T-cell (primary cell): ENCODE measurements at regions of chr2 and their contacts with region 1.

Region 1: GRCh38 chr2:237474931-237475703 is 11.9 kb upstream of the MLPH start:
- DNase-seq: peak; percentile 27 to 82 (median 64)
- ATAC-seq: peak; percentile 83 to 89 (median 86)
- H3K4me3 ChIP-seq: peak overlapping the region; percentile 52 to 76
- H3K4me3 Mint-ChIP-seq: peak overlapping the region; percentile 81 to 89 (median 84)
- H3K27ac ChIP-seq: peak overlapping the region; percentile 42
- H3K27ac Mint-ChIP-seq: peak overlapping the region; percentile 76 to 82
- H3K4me1 ChIP-seq: peaks cover 3 to 26% of the 10 kb centered on the region in 2 experiments
- H3K4me1 Mint-ChIP-seq: peaks cover 11 to 15% (median 12%) of the 10 kb centered on the region in 3 donors
- H3K27me3 ChIP-seq: peaks cover 0 to 12% of the 10 kb centered on the region in 2 experiments
- H3K27me3 Mint-ChIP-seq: peaks cover 16 to 19% of the 10 kb centered on the region in 2 donors

Region 2: GRCh38 chr2:237421542-237422116 is 53.5 kb before region 1 on chr2:
- CTCF ChIA-PET with region 1: interaction called, 64 to 70 read pairs
- POLR2A ChIA-PET with region 1: interaction called in 1 of 2 experiments, 3 read pairs
- DNase-seq: peak; percentile 25 to 89 (median 72)
- ATAC-seq: peak; percentile 89 to 95 (median 91)
- H3K4me3 ChIP-seq: peak overlapping the region in 1 of 2 donors; percentile 29
- H3K4me3 Mint-ChIP-seq: peak overlapping the region; percentile 37 to 75 (median 53)
- H3K27ac ChIP-seq: no peak overlapping the region
- H3K27ac Mint-ChIP-seq: peak overlapping the region; percentile 50 to 59
- H3K4me1 ChIP-seq: peaks cover 3 to 16% of the 10 kb centered on the region in 2 experiments
- H3K4me1 Mint-ChIP-seq: peaks cover 27 to 48% (median 28%) of the 10 kb centered on the region in 3 donors
- H3K27me3 ChIP-seq: peaks cover 0 to 5% of the 10 kb centered on the region in 2 experiments
- H3K27me3 Mint-ChIP-seq: no peaks in the 10 kb centered on the region

Region 3: GRCh38 chr2:237427769-237428506 is 47.2 kb before region 1 on chr2:
- CTCF ChIA-PET with region 1: interaction called, 11 to 64 read pairs
- POLR2A ChIA-PET with region 1: no interaction called
- DNase-seq: peak in 8 of 35 experiments; percentile 13 to 57 (median 37)
- ATAC-seq: peak; percentile 54 to 67 (median 61)
- H3K4me3 ChIP-seq: no peak overlapping the region
- H3K4me3 Mint-ChIP-seq: peak overlapping the region in 2 of 3 donors; percentile 34 to 69
- H3K27ac ChIP-seq: peak overlapping the region; percentile 8
- H3K27ac Mint-ChIP-seq: peak overlapping the region; percentile 80 to 89
- H3K4me1 ChIP-seq: peaks cover 44 to 49% of the 10 kb centered on the region in 2 experiments
- H3K4me1 Mint-ChIP-seq: peaks cover 75 to 88% (median 79%) of the 10 kb centered on the region in 3 donors
- H3K27me3 ChIP-seq: no peaks in the 10 kb centered on the region
- H3K27me3 Mint-ChIP-seq: no peaks in the 10 kb centered on the region

Region 4: GRCh38 chr2:237434866-237435311 is 40.2 kb before region 1 on chr2:
- CTCF ChIA-PET with region 1: interaction called in 1 of 2 experiments, 10 read pairs
- POLR2A ChIA-PET with region 1: interaction called in 1 of 2 experiments, 8 read pairs
- DNase-seq: peak; percentile 42 to 79 (median 67)
- ATAC-seq: peak; percentile 63 to 76 (median 76)
- H3K4me3 ChIP-seq: peak overlapping the region in 1 of 2 donors; percentile 3
- H3K4me3 Mint-ChIP-seq: peak overlapping the region; percentile 71 to 84 (median 74)
- H3K27ac ChIP-seq: peak overlapping the region; percentile 75
- H3K27ac Mint-ChIP-seq: peak overlapping the region; percentile 99
- H3K4me1 ChIP-seq: peaks cover 60 to 77% of the 10 kb centered on the region in 2 experiments
- H3K4me1 Mint-ChIP-seq: peaks cover 83 to 90% (median 85%) of the 10 kb centered on the region in 3 donors
- H3K27me3 ChIP-seq: no peaks in the 10 kb centered on the region
- H3K27me3 Mint-ChIP-seq: no peaks in the 10 kb centered on the region

Region 5: DNA sequence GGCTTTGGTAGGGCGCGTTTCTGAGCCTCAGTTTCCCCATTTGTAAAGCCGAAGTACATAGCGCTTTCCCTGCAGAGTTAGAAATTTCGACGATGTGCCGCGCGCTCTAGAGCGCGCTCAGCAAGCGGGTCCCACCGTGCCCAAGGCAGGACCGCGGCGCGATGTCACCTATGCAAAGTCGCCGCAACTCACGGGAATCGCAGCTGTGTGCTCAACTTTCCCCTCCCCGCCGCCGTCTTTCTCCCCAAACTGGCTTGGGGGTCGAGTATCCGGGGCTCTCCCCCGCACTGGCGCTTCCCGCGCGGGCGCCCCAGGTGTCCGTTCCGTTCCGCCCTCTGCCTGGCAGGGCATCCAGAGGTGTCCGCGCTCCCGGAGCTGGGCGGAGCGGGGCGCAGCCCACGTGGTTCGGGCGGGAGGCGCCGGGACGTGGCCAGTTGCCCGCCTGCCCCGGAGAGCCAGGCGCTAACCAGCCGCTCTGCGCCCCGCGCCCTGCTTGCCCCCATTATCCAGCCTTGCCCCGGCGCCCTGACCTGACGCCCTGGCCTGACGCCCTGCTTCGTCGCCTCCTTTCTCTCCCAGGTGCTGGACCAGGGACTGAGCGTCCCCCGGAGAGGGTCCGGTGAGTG is 11.8 kb after region 1 on chr2 and contains the start of gene MLPH:
- CTCF ChIA-PET with region 1: no interaction called
- POLR2A ChIA-PET with region 1: no interaction called
- DNase-seq: no peak
- ATAC-seq: no peak
- H3K4me3 ChIP-seq: no peak within 1 kb of the TSS
- H3K4me3 Mint-ChIP-seq: no peak within 1 kb of the TSS
- H3K27ac ChIP-seq: no peak within 1 kb of the TSS
- H3K27ac Mint-ChIP-seq: no peak within 1 kb of the TSS
- H3K4me1 ChIP-seq: no peaks in the 10 kb centered on the region
- H3K4me1 Mint-ChIP-seq: peaks cover 0 to 2% (median 0%) of the 10 kb centered on the region in 3 donors
- H3K27me3 ChIP-seq: peaks cover 5 to 60% of the 10 kb centered on the region in 2 experiments
- H3K27me3 Mint-ChIP-seq: peaks cover 42 to 61% of the 10 kb centered on the region in 2 donors
- total RNA-seq, gene MLPH: 0.55 to 1.4 (median 0.72) TPM in 3 of 5 donors, not detected in the others